Activated T-helper 2 cell treated with anti-CD3 and anti-CD28 coated beads, Interferon-gamma antibody, Interleukin-2, Interleukin-4, amounts not matched to agents 10 μg/mL and 5 μg/mL and 100 μg/mL, durations not matched to agents 14 hours and 24 hours and 36 hours (primary cell): ENCODE measurements at regions of chrX and their contacts with region 1.

Region 1: DNA sequence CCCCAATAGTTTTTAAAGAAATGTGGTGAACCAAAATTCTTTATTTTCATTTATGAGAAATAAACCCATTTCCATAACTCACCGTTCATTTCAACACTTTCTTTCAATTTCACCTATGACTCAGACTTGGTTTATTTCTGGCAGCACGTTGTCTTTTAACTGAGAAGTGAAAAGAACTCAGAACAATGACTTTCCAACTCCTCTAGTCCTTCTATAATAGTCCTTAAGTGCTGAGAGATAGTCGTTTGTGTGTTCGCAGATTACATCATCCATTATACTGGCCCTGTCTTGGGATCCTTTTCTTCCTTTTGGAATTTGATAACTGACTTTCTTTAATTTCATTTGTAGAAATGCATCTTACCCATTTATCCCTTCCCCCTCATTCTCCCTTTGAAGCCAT is 113.6 kb downstream of the GLUD2 start:
- DNase-seq: no peak
- H3K4me3 Mint-ChIP-seq: peak overlapping the region; percentile 17
- H3K27ac Mint-ChIP-seq: peak overlapping the region; percentile 88
- H3K4me1 Mint-ChIP-seq: peaks cover 37% of the 10 kb centered on the region
- H3K27me3 Mint-ChIP-seq: no peaks in the 10 kb centered on the region

Region 2: GRCh38 chrX:121298499-121298898 is 137.5 kb after region 1 on chrX:
- intact Hi-C with region 1: loop called (anchors 1 kb)
- DNase-seq: no peak
- H3K4me3 Mint-ChIP-seq: no peak overlapping the region
- H3K27ac Mint-ChIP-seq: no peak overlapping the region
- H3K4me1 Mint-ChIP-seq: peaks cover 6% of the 10 kb centered on the region
- H3K27me3 Mint-ChIP-seq: no peaks in the 10 kb centered on the region

Region 3: DNA sequence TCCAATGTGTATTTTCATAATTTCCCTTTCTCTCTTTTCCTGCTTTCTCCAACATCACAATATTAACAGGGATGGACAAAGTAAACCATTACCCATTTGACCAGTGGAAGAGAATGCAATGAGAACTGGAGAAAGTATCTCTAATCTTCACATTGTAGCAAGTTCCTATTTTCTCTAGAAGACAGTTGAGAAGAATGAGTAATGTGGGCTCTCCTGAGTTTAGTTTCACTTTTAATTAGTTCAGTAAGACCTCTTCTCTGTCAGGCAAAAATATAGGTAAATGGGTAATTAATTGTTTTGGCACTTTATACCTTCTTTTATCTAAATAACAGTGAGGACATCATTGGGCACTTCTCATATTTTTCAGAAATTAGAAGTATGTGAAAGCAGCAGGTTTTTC is 488.4 kb after region 1 on chrX:
- intact Hi-C with region 1: loop called (anchors 5 kb)
- DNase-seq: no peak
- H3K4me3 Mint-ChIP-seq: no peak overlapping the region
- H3K27ac Mint-ChIP-seq: no peak overlapping the region
- H3K4me1 Mint-ChIP-seq: peaks cover 3% of the 10 kb centered on the region
- H3K27me3 Mint-ChIP-seq: no peaks in the 10 kb centered on the region